Mucosa of descending colon (tissue), 3 donors: ENCODE measurements at regions of chr10 and their contacts with region 1.

Region 1: GRCh38 chr10:114477285-114477684 is 73.0 kb upstream of the AFAP1L2 start:
- DNase-seq: no peak
- ATAC-seq: peak; percentile 23
- H3K4me3 ChIP-seq: no peak overlapping the region
- H3K4me1 ChIP-seq: peaks cover 18% of the 10 kb centered on the region
- CTCF ChIP-seq: no peak

Region 2: GRCh38 chr10:114532226-114532625 is 54.9 kb after region 1 on chr10:
- intact Hi-C with region 1: no loop called
- DNase-seq: no peak
- ATAC-seq: no peak
- H3K4me3 ChIP-seq: no peak overlapping the region
- H3K4me1 ChIP-seq: peaks cover 4% of the 10 kb centered on the region
- CTCF ChIP-seq: no peak

Region 3: GRCh38 chr10:114791768-114792167 is 314.5 kb after region 1 on chr10:
- intact Hi-C with region 1: loop called (anchors 5 to 10 kb)
- DNase-seq: no peak
- ATAC-seq: no peak
- H3K4me3 ChIP-seq: no peak overlapping the region
- H3K4me1 ChIP-seq: no peaks in the 10 kb centered on the region
- CTCF ChIP-seq: no peak